ENCODE measurements at regions of chr6 and their contacts with region 1.

Region 1: GRCh38 chr6:19851241-19852089 is 14.3 kb downstream of the ID4 start:
- DNase-seq: peak; percentile 46
- H3K4me3 ChIP-seq: no peak overlapping the region
- H3K27ac ChIP-seq: no peak overlapping the region
- H3K4me1 ChIP-seq: no peaks in the 10 kb centered on the region
- H3K27me3 ChIP-seq: no peaks in the 10 kb centered on the region
- CTCF ChIP-seq: peak; percentile 88 to 89

Region 2: GRCh38 chr6:18748314-18748713 is 1103.2 kb before region 1 on chr6:
- CTCF ChIA-PET with region 1: no interaction called
- dilution Hi-C with region 1: no loop called
- in situ Hi-C with region 1: no loop called
- intact Hi-C with region 1: loop called (anchors 5 kb)
- DNase-seq: no peak
- H3K4me3 ChIP-seq: no peak overlapping the region
- H3K27ac ChIP-seq: no peak overlapping the region
- H3K4me1 ChIP-seq: no peaks in the 10 kb centered on the region
- H3K27me3 ChIP-seq: peaks cover 4% of the 10 kb centered on the region
- CTCF ChIP-seq: no peak

Region 3: GRCh38 chr6:19024737-19025136 is 826.7 kb before region 1 on chr6:
- CTCF ChIA-PET with region 1: interaction called, 4 read pairs
- dilution Hi-C with region 1: no loop called
- in situ Hi-C with region 1: loop called (anchors 25 kb)
- intact Hi-C with region 1: loop called (anchors 1 kb)
- DNase-seq: peak; percentile 37
- H3K4me3 ChIP-seq: no peak overlapping the region
- H3K27ac ChIP-seq: no peak overlapping the region
- H3K4me1 ChIP-seq: no peaks in the 10 kb centered on the region
- H3K27me3 ChIP-seq: no peaks in the 10 kb centered on the region
- CTCF ChIP-seq: peak; percentile 59 to 79

Region 4: DNA sequence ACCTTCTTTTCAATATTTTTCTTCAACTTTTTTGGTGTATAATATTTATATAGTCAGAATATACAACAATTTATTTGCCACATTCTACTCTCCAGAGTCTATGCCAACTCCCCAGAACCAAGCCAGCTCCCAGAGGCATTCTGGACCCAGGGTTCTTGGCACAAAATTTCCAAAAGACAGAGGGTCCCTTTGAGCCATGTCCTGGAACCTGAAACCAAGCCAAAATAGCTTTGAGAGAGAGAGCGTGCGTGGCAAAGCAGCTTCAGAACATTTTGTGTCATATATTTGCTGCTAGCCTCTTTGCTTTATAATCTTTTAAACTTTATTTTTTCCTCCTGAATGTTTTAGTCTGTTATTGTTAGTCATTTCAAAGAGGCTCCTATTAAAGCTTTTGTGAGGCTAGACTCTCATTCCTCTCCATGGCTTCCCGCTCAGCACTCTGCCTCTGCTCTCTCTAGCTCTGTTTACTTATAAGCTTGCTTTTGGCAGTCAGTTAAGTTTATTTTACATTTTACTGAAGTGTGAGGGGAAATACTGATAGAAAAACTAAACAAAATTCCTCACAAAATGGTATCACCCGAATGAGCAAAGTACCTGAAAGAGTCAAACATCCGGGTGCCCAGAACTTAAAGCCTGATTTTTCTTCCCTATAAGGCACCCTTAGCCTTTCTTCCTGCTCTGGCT is 619.4 kb before region 1 on chr6:
- CTCF ChIA-PET with region 1: no interaction called
- dilution Hi-C with region 1: no loop called
- in situ Hi-C with region 1: no loop called
- intact Hi-C with region 1: loop called (anchors 10 kb)
- DNase-seq: no peak
- H3K4me3 ChIP-seq: no peak overlapping the region
- H3K27ac ChIP-seq: no peak overlapping the region
- H3K4me1 ChIP-seq: no peaks in the 10 kb centered on the region
- H3K27me3 ChIP-seq: no peaks in the 10 kb centered on the region
- CTCF ChIP-seq: no peak

Region 5: GRCh38 chr6:19410481-19410880 is 441.0 kb before region 1 on chr6:
- CTCF ChIA-PET with region 1: no interaction called
- dilution Hi-C with region 1: no loop called
- in situ Hi-C with region 1: no loop called
- intact Hi-C with region 1: loop called (anchors 5 kb)
- DNase-seq: peak; percentile 95
- H3K4me3 ChIP-seq: no peak overlapping the region
- H3K27ac ChIP-seq: peak overlapping the region; percentile 67
- H3K4me1 ChIP-seq: peaks cover 44% of the 10 kb centered on the region
- H3K27me3 ChIP-seq: no peaks in the 10 kb centered on the region
- CTCF ChIP-seq: no peak

Region 6: GRCh38 chr6:19719691-19720128 is 131.8 kb before region 1 on chr6:
- CTCF ChIA-PET with region 1: no interaction called
- dilution Hi-C with region 1: no loop called
- in situ Hi-C with region 1: no loop called
- intact Hi-C with region 1: no loop called
- DNase-seq: peak; percentile 19
- H3K4me3 ChIP-seq: no peak overlapping the region
- H3K27ac ChIP-seq: no peak overlapping the region
- H3K4me1 ChIP-seq: peaks cover 6% of the 10 kb centered on the region
- H3K27me3 ChIP-seq: no peaks in the 10 kb centered on the region
- CTCF ChIP-seq: no peak

Region 7: DNA sequence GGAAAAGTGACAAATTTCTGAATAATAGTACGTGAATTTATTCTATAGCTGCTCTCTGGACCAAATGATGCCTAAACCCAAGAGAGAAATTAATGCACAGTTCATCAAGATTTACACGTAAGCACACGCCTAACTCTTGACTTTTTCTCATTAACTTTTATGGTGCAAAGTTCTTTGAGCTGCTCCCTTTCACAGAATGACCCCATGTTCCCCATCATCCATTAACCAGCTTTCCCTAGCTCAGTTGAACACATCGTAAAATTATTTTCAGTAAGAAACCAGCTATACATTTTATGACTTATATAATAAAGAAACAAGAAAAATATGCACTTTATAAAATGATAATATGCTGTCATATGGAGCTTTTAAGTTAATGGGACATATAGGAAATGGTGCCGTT is 40.0 kb after region 1 on chr6:
- CTCF ChIA-PET with region 1: no interaction called
- dilution Hi-C with region 1: no loop called
- in situ Hi-C with region 1: no loop called
- intact Hi-C with region 1: no loop called
- DNase-seq: no peak
- H3K4me3 ChIP-seq: no peak overlapping the region
- H3K27ac ChIP-seq: no peak overlapping the region
- H3K4me1 ChIP-seq: peaks cover 33% of the 10 kb centered on the region
- H3K27me3 ChIP-seq: no peaks in the 10 kb centered on the region
- CTCF ChIP-seq: no peak

Measured in mammary epithelial cell (primary cell).